ENCODE measurements at regions of chr6 and their contacts with region 1.

Region 1: DNA sequence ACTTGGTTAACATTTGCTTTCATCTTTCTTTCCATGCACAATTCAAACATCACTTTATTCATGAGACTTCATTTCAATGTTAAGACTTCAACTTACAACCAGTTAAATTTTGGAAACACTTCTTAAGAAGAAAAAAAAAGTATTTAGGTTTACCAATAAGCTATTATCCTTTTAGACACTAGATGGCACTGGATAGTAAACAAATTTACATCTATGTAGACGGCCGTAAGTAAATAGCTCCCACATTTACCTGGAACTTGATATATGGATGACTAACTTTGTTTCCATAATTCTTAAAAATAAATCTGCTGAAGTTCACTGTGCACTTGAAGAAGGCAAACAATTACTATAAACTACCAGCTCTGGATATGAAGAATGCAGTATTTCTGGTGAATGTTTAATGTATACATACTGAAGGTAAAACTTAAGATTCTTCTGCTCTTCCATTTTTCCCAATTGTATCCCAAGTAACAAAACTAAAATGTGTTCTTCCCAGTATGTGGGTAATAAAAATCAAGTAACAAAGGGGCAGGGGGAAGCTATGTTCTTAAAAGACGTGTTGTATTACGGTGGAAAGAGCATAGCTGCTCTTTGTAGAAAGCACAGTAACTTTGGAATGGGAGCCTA is 130.6 kb upstream of the C6orf118 start:
- DNase-seq: no peak

Region 2: DNA sequence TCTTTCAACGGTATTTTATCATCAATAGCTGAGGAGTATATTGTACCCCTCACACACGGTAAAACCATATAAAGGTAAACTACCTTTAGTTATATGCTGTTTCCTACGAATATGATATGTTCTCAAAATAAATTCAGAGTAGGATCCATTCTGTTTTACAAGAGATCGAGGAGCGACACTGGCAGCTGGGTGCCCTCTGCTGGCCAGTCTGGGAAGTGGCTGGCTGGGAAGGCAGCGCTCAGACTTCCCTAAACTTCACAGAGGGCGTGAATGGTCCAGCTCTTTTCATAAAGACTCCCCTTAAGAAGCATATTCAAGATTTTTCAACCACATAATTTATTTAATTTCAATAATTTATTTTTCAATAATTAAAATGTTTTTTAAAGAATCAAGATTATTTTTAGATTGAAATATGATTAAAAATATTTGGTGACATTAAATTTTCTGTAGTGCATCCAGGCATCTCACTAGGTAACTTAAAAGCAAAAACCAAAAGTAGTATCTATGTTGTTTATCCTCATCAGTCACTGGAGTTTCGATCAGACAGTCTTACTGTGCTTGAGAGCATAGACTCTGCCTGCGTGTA is 410.5 kb after region 1 on chr6:
- intact Hi-C with region 1: loop called (anchors 5 to 10 kb)
- DNase-seq: peak; percentile 93